ENCODE measurements at regions of chr6 and their contacts with region 1.

Region 1: GRCh38 chr6:107318100-107318736 is 141.1 kb downstream of the PDSS2 start:
- DNase-seq: peak; percentile 43 to 76 (median 61)
- ATAC-seq: peak; percentile 100
- H3K4me3 ChIP-seq: no peak overlapping the region
- H3K27ac ChIP-seq: no peak overlapping the region
- H3K4me1 ChIP-seq: no peaks in the 10 kb centered on the region
- H3K27me3 ChIP-seq: no peaks in the 10 kb centered on the region
- CTCF ChIP-seq: peak; percentile 73 to 85 (median 80)
- EP300 ChIP-seq: no peak
- POLR2A ChIP-seq: no peak
- RAD21 ChIP-seq: peak; percentile 72 to 88

Region 2: GRCh38 chr6:107075951-107076381 is 242.3 kb before region 1 on chr6:
- CTCF ChIA-PET with region 1: no interaction called
- POLR2A ChIA-PET with region 1: no interaction called
- in situ Hi-C with region 1: no loop called
- intact Hi-C with region 1: no loop called
- DNase-seq: no peak
- ATAC-seq: no peak
- H3K4me3 ChIP-seq: no peak overlapping the region
- H3K27ac ChIP-seq: no peak overlapping the region
- H3K4me1 ChIP-seq: peaks cover 0 to 3% of the 10 kb centered on the region in 2 experiments; a peak in 2 of 5 replicates
- H3K27me3 ChIP-seq: no peaks in the 10 kb centered on the region
- CTCF ChIP-seq: peak in 2 of 3 experiments; percentile 24 to 45; a peak in 2 of 6 replicates
- EP300 ChIP-seq: no peak
- POLR2A ChIP-seq: no peak
- RAD21 ChIP-seq: peak in 1 of 2 experiments; percentile 43; a peak in 2 of 4 replicates

Region 3: GRCh38 chr6:107185391-107185970 is 132.7 kb before region 1 on chr6:
- CTCF ChIA-PET with region 1: no interaction called
- POLR2A ChIA-PET with region 1: no interaction called
- in situ Hi-C with region 1: no loop called
- intact Hi-C with region 1: loop called (anchors 5 kb)
- DNase-seq: peak in 1 of 4 experiments; percentile 21
- ATAC-seq: peak; percentile 84
- H3K4me3 ChIP-seq: no peak overlapping the region
- H3K27ac ChIP-seq: no peak overlapping the region
- H3K4me1 ChIP-seq: no peaks in the 10 kb centered on the region
- H3K27me3 ChIP-seq: no peaks in the 10 kb centered on the region
- CTCF ChIP-seq: peak; percentile 22 to 51 (median 29); a peak in 4 of 6 replicates
- EP300 ChIP-seq: no peak
- POLR2A ChIP-seq: no peak
- RAD21 ChIP-seq: peak in 1 of 2 experiments; percentile 61; a peak in 2 of 4 replicates

Region 4: GRCh38 chr6:107634324-107635056 is 316.3 kb after region 1 on chr6:
- CTCF ChIA-PET with region 1: no interaction called
- POLR2A ChIA-PET with region 1: no interaction called
- in situ Hi-C with region 1: no loop called
- intact Hi-C with region 1: loop called (anchors 1 kb)
- DNase-seq: no peak
- ATAC-seq: no peak
- H3K4me3 ChIP-seq: no peak overlapping the region
- H3K27ac ChIP-seq: no peak overlapping the region
- H3K4me1 ChIP-seq: peaks cover 0 to 6% of the 10 kb centered on the region in 2 experiments; a peak in 1 of 5 replicates
- H3K27me3 ChIP-seq: peaks cover 7 to 26% of the 10 kb centered on the region in 2 experiments
- CTCF ChIP-seq: no peak
- EP300 ChIP-seq: no peak
- POLR2A ChIP-seq: no peak
- RAD21 ChIP-seq: no peak